ENCODE measurements at regions of chr3 and their contacts with region 1.

Region 1: DNA sequence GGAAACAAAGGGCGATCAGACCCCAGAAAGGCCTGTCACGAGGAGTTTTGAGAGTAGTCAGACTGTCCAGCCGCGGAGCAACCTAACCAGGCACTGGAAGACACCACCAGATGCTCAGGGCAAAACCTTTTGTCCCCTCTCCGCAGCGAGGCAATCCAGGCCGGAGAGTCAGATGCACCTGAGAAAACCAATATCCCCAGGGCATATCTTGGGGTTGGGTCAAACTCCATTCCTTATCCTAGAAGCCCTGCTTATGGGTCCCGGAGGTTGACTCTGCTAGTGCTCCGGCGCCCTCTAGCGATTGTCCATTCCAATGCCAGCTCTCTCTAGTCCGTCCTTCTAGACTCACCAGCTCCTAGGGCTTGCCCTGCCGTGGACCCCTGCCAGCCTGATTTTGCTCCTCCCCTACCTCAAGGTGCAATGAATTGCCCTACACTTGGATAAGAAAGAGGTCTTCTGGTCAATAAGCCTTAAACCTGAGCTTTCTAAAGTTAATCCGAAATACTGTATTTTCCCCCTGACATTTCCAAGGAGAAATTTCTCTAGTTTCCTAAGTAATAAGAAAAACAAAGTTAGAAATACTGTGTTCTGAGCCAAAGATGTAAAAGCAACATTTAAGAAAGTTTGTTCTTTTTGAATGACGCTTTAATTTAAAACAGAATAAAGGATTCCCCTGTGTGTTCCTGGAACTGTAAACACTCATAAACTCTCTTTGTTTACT is 5.5 kb downstream of the CPNE4 start:
- DNase-seq: peak; percentile 77 to 80
- ATAC-seq: peak; percentile 63 to 94 (median 87)
- H3K4me3 ChIP-seq: no peak overlapping the region
- H3K27ac ChIP-seq: no peak overlapping the region
- H3K4me1 ChIP-seq: peaks cover 0 to 9% (median 0%) of the 10 kb centered on the region in 9 donors
- H3K27me3 ChIP-seq: peaks cover 0 to 49% (median 37%) of the 10 kb centered on the region in 7 donors
- CTCF ChIP-seq: peak; percentile 73 to 93 (median 86)

Region 2: DNA sequence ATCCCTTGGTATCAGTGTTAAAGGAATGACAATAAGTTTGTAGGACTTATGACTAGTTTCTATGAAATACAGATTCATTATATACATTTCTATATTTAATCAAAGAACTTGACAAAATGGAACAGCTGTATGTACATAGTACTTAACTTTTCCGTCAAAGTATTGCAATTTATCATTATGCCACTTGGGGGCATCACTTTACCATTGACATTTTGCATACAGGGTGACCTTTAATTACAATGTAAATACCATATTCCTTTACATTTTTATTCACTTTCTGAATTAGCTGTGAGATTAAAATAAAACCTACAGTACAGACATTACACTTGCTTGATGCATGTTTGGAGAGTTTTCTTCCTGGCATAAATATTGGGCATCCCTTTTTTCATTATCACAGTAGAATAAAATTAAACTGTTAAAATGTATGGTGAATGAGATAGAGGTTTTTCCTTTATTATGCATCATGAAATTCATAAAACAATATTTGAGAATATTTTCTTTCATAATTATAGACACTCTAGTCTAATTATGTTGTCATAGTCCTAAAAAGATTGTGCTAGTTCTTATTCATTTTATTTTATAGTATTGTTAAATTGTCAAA is 995.8 kb before region 1 on chr3:
- intact Hi-C with region 1: loop called in 4 of 10 experiments (anchors 5 to 10 kb)
- DNase-seq: no peak
- ATAC-seq: no peak
- H3K4me3 ChIP-seq: no peak overlapping the region
- H3K27ac ChIP-seq: no peak overlapping the region
- H3K4me1 ChIP-seq: no peaks in the 10 kb centered on the region
- H3K27me3 ChIP-seq: no peaks in the 10 kb centered on the region
- CTCF ChIP-seq: peak in 8 of 9 donors; percentile 57 to 80 (median 68)

Region 3: GRCh38 chr3:131053043-131053859 is 976.1 kb before region 1 on chr3:
- intact Hi-C with region 1: loop called in 6 of 10 experiments (anchors 5 to 10 kb)
- DNase-seq: no peak
- ATAC-seq: no peak
- H3K4me3 ChIP-seq: no peak overlapping the region
- H3K27ac ChIP-seq: no peak overlapping the region
- H3K4me1 ChIP-seq: no peaks in the 10 kb centered on the region
- H3K27me3 ChIP-seq: no peaks in the 10 kb centered on the region
- CTCF ChIP-seq: peak; percentile 32 to 71 (median 55)

Region 4: DNA sequence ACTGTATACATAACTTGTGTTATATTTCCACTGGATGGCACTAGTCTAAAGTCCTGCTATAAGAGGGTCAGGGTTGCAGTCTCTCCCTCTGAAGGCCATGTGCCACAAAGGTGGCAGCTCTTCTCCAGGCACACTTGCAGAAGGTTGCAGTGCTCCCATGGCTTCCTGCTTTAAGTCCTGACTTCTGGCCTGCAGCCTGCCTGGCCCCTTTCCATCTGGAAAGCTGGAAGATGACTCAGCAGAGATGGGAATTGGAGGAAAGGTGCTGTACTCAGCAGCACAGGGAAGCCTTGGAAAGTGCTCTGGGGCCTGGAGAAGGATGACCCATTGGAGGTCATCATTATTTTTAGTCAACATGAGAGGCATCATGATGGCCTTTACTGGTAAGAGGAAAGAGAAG is 485.6 kb before region 1 on chr3:
- intact Hi-C with region 1: loop called in 1 of 10 experiments (anchors 10 kb)
- DNase-seq: peak; percentile 73 to 75
- ATAC-seq: peak; percentile 88 to 99 (median 95)
- H3K4me3 ChIP-seq: no peak overlapping the region
- H3K27ac ChIP-seq: peak overlapping the region in 5 of 10 donors; percentile 30 to 52 (median 46)
- H3K4me1 ChIP-seq: peaks cover 0 to 14% (median 8%) of the 10 kb centered on the region in 9 donors
- H3K27me3 ChIP-seq: no peaks in the 10 kb centered on the region
- CTCF ChIP-seq: peak in 2 of 9 donors; percentile 15 to 18

Region 5: DNA sequence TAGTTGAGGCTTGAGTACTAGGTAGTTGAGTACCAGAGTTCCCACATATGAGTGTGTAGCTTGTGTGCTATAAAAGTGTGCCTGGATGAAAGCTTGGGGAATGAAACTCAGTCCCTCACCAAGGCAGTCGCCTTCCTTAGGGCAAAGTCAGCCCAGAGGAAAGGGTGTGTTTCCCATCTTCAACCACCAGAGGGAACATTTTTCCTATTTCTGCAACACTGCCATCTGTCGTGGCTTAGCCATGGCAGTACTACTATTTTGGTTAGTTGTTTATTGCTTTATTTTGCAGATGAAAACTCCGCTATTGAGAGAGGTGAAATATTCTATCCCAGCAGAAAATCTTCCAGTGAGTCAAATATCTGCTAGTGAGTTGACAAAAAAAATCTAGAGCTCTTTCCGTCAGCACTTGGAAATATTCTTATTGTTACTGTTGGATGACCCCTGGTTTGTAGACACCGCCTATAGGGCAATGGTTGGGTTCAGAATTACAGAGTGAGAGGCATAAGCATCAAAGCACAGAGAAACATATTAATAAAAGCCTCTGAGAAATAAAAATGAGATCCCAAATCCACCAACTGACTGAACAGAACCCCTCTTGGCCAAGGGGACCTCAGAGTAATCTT is 234.5 kb before region 1 on chr3:
- intact Hi-C with region 1: loop called (anchors 1 to 5 kb)
- DNase-seq: peak in 1 of 2 donors; percentile 27
- ATAC-seq: peak; percentile 58 to 85 (median 80)
- H3K4me3 ChIP-seq: no peak overlapping the region
- H3K27ac ChIP-seq: no peak overlapping the region
- H3K4me1 ChIP-seq: peaks cover 0 to 38% (median 19%) of the 10 kb centered on the region in 9 donors
- H3K27me3 ChIP-seq: no peaks in the 10 kb centered on the region
- CTCF ChIP-seq: peak; percentile 60 to 88 (median 84)

Region 6: DNA sequence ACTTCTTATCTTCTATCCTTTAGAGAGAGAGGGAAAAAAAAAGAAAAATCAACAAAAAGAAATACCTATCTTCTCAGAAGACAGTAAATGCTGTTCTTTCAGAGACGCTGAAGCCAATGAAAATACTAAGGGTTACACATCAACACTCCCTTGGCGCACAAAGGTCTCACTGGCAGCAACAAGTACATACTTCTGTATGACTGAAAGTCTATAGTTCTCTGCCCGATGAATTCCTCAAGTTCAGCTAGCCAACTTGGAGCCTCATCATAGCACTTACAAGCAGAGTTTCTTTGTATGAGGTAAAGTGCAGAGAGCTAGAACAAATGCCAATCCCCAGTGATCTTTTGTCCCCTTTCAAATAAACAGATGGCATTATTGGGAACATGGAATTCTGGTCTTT is 57.3 kb before region 1 on chr3:
- intact Hi-C with region 1: no loop called
- DNase-seq: no peak
- ATAC-seq: no peak
- H3K4me3 ChIP-seq: no peak overlapping the region
- H3K27ac ChIP-seq: peak overlapping the region in 1 of 10 donors; percentile 39
- H3K4me1 ChIP-seq: peaks cover 0 to 23% (median 0%) of the 10 kb centered on the region in 9 donors
- H3K27me3 ChIP-seq: no peaks in the 10 kb centered on the region
- CTCF ChIP-seq: no peak

Region 7: GRCh38 chr3:132006605-132007204 is 22.6 kb before region 1 on chr3:
- intact Hi-C with region 1: no loop called
- DNase-seq: peak; percentile 4 to 8
- ATAC-seq: no peak
- H3K4me3 ChIP-seq: no peak overlapping the region
- H3K27ac ChIP-seq: no peak overlapping the region
- H3K4me1 ChIP-seq: no peaks in the 10 kb centered on the region
- H3K27me3 ChIP-seq: no peaks in the 10 kb centered on the region
- CTCF ChIP-seq: peak in 7 of 9 donors; percentile 40 to 55 (median 46)

Region 8: DNA sequence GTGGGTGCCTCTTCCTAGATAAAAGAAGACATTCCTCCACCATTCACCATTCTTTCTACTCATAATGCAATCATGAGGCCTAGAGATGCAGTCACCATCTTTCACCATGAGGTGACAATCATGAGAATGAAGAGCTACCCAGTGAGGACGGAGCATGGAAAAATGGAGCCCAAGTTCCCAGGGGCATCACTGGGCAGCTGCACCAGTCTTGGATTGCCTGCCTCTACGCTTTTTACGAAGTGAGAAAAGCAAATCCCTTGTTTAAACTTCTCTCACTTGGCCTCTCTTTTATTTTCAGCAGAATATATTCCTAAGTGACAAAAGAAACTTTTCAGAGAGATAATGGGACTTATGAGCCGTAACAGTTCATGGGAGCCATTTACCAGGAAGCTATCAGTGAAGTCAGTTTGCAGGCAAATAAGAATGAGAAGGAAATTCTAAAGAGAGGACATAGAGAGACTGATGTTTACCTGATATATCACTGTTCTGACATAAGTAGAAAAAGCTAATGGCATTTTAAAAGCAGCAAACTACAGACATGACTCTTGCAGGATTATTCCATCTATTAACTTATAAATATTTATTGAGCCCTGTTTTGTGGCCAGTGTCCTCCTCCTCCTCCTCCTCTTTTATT is 95.4 kb after region 1 on chr3:
- intact Hi-C with region 1: no loop called
- DNase-seq: no peak
- ATAC-seq: no peak
- H3K4me3 ChIP-seq: no peak overlapping the region
- H3K27ac ChIP-seq: no peak overlapping the region
- H3K4me1 ChIP-seq: no peaks in the 10 kb centered on the region
- H3K27me3 ChIP-seq: no peaks in the 10 kb centered on the region
- CTCF ChIP-seq: no peak